ENCODE measurements at regions of chr15 and their contacts with region 1.

Region 1: GRCh38 chr15:75361361-75361988 is 6.9 kb downstream of the MAN2C1 start:
- DNase-seq: no peak
- ATAC-seq: no peak
- H3K4me3 ChIP-seq: no peak overlapping the region
- H3K27ac ChIP-seq: no peak overlapping the region
- H3K4me1 ChIP-seq: no peaks in the 10 kb centered on the region
- H3K27me3 ChIP-seq: no peaks in the 10 kb centered on the region
- CTCF ChIP-seq: no peak

Region 2: DNA sequence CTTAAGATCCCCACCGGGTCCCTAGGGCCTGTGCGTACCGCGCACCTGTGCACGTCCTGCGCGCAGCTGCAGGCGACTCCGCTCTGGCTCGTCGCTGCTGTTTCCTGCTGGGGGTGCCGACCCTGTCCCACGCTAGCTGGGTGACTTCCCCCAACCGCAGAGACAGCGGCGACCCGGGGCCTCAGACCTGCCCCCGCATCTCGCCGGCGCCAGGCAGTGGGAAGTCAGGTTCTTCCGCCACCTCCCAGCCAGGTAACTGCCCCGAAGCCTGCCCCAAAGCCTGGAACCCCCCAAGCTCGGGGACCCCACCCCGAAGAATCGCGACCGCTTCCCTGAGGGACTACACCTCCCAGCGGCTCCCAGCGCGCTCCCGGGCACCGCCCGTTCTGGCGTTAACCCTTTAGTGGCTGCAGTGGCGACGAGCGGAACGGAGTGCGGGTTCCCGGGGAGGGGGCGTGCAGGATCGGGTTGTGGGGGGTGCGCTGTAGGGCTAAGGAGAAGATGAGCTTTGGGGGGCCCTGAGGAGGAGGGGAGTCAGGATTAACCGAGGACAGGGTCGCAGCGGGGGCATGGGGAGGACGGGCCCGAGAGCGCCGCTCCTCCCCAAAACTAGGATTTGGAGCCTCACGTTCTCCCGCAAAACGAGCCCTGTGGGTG is 14.1 kb before region 1 on chr15:
- CTCF ChIA-PET with region 1: no interaction called
- POLR2A ChIA-PET with region 1: no interaction called
- intact Hi-C with region 1: no loop called
- DNase-seq: peak; percentile 32
- ATAC-seq: peak; percentile 58
- H3K4me3 ChIP-seq: peak overlapping the region; percentile 77
- H3K27ac ChIP-seq: no peak overlapping the region
- H3K4me1 ChIP-seq: no peaks in the 10 kb centered on the region; the same call in 1 of the 2 replicates
- H3K27me3 ChIP-seq: no peaks in the 10 kb centered on the region
- CTCF ChIP-seq: no peak

Region 3: GRCh38 chr15:75389791-75390382 is 28.4 kb after region 1 on chr15:
- CTCF ChIA-PET with region 1: no interaction called
- POLR2A ChIA-PET with region 1: interaction called, 12 read pairs
- intact Hi-C with region 1: no loop called
- DNase-seq: no peak
- ATAC-seq: no peak
- H3K4me3 ChIP-seq: no peak overlapping the region
- H3K27ac ChIP-seq: no peak overlapping the region
- H3K4me1 ChIP-seq: no peaks in the 10 kb centered on the region
- H3K27me3 ChIP-seq: no peaks in the 10 kb centered on the region
- CTCF ChIP-seq: no peak

Measured in PC-3 (cell line).